Ascending aorta (tissue), 2 donors: ENCODE measurements at regions of chr20 and their contacts with region 1.

Region 1: DNA sequence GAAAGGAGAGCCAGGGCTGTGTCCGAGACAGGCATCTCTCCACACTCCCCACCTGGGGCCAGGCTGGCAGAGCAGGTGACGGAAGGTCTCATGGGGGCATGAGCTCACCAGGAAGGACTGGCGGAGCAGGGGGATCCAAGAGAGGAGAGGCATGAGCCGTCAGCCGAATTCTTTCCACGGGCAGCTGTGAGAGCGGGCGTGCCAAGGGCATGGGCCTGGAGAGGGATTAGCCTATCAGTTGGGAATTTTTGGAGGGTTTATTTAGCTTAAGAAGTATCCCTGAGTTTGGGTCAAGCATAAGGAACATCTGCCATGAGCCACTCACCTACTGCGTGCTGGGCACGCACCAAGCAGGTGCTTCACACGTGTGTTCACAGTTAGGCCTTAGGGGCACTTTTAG is 60.2 kb upstream of the ZNFX1 start:
- DNase-seq: no peak
- H3K4me3 ChIP-seq: no peak overlapping the region
- H3K27ac ChIP-seq: no peak overlapping the region
- H3K4me1 ChIP-seq: peaks cover 0 to 3% of the 10 kb centered on the region in 2 donors
- H3K27me3 ChIP-seq: no peaks in the 10 kb centered on the region
- CTCF ChIP-seq: no peak

Region 2: GRCh38 chr20:49508435-49509199 is 170.6 kb after region 1 on chr20:
- intact Hi-C with region 1: loop called (anchors 1 kb)
- DNase-seq: no peak
- H3K4me3 ChIP-seq: no peak overlapping the region
- H3K27ac ChIP-seq: peak overlapping the region; percentile 62 to 70
- H3K4me1 ChIP-seq: peaks cover 12 to 57% of the 10 kb centered on the region in 2 donors
- H3K27me3 ChIP-seq: no peaks in the 10 kb centered on the region
- CTCF ChIP-seq: peak; percentile 51 to 59 (median 52)

Region 3: DNA sequence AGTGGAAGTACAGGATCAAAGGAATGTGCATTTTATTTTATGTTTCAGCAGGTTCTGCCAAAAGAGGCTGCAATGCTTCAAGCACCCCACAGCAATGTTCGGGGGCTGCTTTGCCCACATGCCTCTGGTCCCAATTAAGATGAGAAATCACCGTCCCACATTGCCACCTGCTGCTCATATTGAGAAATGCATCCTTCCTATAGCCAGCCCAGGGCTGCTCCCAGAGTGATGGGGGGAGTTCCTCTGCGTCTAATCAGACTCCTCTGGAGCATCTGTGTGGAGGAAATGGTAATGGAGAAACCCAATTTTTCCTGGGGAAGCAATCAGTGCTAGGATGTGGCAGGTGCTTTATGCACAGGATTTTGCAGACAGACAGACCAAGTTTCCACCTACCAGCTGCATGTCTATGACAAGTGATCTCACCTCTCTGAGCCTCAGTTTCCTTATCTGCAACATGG is 196.2 kb after region 1 on chr20:
- intact Hi-C with region 1: loop called (anchors 1 kb)
- DNase-seq: no peak
- H3K4me3 ChIP-seq: no peak overlapping the region
- H3K27ac ChIP-seq: peak overlapping the region in 1 of 2 donors; percentile 0
- H3K4me1 ChIP-seq: no peaks in the 10 kb centered on the region
- H3K27me3 ChIP-seq: no peaks in the 10 kb centered on the region
- CTCF ChIP-seq: peak; percentile 81 to 90 (median 81)